WTC11 (cell line): ENCODE measurements at regions of chr1 and their contacts with region 1.

Region 1: DNA sequence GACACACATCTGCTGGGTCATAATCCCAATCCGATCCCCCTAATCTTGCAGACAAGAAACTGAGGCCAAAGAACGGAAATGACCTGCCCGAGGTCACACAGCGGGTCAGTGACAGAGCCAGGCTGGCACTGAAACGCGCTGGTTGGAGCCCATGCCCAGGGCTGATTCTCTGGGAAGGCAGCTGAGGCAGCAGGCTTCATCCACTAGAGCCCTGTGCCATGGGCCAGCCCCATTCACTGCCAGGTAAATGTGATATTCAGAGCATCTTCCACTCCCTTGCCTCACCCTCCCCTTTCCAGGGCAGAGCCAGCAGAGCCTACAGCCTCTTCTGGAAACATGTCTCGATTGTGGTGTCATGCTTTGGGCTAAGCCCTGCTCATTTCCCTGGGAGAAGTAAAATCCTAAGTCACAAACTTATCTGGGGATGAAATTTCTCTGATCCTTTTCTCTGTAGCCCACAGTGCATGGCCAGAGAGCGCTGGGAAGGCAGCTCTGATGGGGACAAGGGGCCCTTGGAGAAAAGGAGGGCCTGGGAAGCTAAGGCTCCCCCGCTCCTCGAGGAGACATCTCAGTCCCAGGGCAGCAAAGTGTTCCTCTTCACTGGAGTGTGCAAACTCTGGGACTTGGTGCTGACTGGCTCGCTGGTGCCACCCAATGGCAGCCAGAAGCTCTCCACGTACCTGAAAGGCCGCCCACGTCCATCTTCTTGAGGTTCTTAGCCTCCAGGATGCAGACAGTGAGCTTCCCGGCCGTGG is 110.4 kb downstream of the SYT2 start:
- DNase-seq: peak; percentile 72
- ATAC-seq: peak; percentile 96
- H3K4me3 Mint-ChIP-seq: no peak overlapping the region
- H3K27ac Mint-ChIP-seq: no peak overlapping the region
- H3K4me1 Mint-ChIP-seq: no peaks in the 10 kb centered on the region
- H3K27me3 Mint-ChIP-seq: no peaks in the 10 kb centered on the region
- CTCF ChIP-seq: peak; percentile 52; the same call in 1 of the 2 replicates

Region 2: GRCh38 chr1:202571347-202572339 is 28.2 kb before region 1 on chr1:
- CTCF ChIA-PET with region 1: interaction called, 25 read pairs
- POLR2A ChIA-PET with region 1: no interaction called
- DNase-seq: peak; percentile 44
- ATAC-seq: peak; percentile 55; the same call in 1 of the 2 replicates
- H3K4me3 Mint-ChIP-seq: no peak overlapping the region
- H3K27ac Mint-ChIP-seq: 0 out of 2 replicates have a peak overlapping the region, but pooled peaks have one; percentile 38
- H3K4me1 Mint-ChIP-seq: peaks cover 40% of the 10 kb centered on the region
- H3K27me3 Mint-ChIP-seq: no peaks in the 10 kb centered on the region
- CTCF ChIP-seq: peak; percentile 74

Region 3: GRCh38 chr1:202586018-202586821 is 13.6 kb before region 1 on chr1:
- CTCF ChIA-PET with region 1: interaction called, 16 read pairs
- POLR2A ChIA-PET with region 1: no interaction called
- DNase-seq: no peak
- ATAC-seq: no peak
- H3K4me3 Mint-ChIP-seq: no peak overlapping the region
- H3K27ac Mint-ChIP-seq: 0 out of 2 replicates have a peak overlapping the region, but pooled peaks have one; percentile 39
- H3K4me1 Mint-ChIP-seq: no peaks in the 10 kb centered on the region
- H3K27me3 Mint-ChIP-seq: no peaks in the 10 kb centered on the region; the same call in 1 of the 2 replicates
- CTCF ChIP-seq: no peak

Region 4: DNA sequence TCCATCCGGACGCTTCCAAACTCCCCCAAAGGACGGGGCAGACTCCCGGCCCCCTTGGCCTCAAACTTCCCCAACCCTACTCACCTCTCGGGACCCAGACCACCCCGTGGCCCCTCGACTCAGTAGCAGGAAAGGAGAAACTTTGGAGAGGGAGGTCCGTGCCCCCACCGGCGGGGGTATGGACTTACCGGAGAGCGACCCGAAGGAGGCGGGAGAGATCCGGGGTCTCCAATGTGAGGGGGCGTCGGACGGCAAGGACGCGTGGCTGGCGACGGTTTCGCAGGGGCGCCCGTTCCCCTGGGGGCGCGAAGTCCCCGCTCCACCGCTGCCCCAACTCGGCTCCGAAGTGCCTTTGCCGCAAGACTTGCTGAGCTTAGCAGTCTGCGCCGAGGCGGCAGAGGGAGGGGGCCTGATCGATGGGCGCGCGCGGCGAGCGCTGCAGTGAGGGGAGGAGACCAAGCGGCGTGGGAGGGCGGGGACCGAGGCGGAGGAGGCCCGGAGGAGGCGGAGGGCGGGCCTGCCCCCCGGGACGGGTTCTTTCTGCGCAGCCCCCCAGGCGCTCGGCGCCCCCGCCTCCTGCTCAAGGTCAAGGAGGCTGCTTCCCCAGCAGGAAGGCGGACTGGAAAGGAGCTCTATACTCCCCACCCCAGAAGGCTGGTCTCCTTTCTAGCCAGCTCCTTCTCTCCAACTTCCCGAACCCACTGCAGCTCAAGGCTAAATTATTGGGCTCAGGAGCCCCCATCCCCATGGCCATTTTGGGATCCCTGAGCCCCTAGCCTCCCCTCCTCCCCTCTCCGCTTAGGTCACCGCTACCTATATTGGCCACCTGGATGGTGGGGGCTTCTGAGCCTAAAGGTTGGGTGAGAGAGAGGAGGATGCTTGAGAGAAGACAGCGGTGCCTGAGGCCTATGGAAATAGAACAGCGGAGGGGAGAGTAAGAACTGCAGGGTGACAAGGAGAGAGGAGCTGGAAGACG is 110.5 kb after region 1 on chr1 and contains the start of gene SYT2:
- CTCF ChIA-PET with region 1: interaction called, 15 read pairs
- POLR2A ChIA-PET with region 1: no interaction called
- DNase-seq: peak; percentile 78
- ATAC-seq: peak; percentile 41
- H3K4me3 Mint-ChIP-seq: peak within 1 kb of the TSS; percentile 77
- H3K27ac Mint-ChIP-seq: no peak within 1 kb of the TSS
- H3K4me1 Mint-ChIP-seq: peaks cover 36% of the 10 kb centered on the region
- H3K27me3 Mint-ChIP-seq: peaks cover 31% of the 10 kb centered on the region
- CTCF ChIP-seq: no peak
- total RNA-seq, gene SYT2: 9.5 to 12.1 TPM (median 9.6 TPM) in 3 replicates